Common myeloid progenitor, CD34-positive (primary cell): ENCODE measurements at regions of chr7 and their contacts with region 1.

Region 1: GRCh38 chr7:4791738-4792536 is 16.5 kb downstream of the AP5Z1 start:
- DNase-seq: peak; percentile 75 to 88 (median 84)
- H3K4me3 ChIP-seq: peak overlapping the region in 6 of 7 experiments; percentile 30 to 72 (median 66)
- H3K27ac ChIP-seq: no peak overlapping the region
- H3K4me1 ChIP-seq: peaks cover 0 to 12% (median 5%) of the 10 kb centered on the region in 4 experiments
- H3K27me3 ChIP-seq: no peaks in the 10 kb centered on the region

Region 2: DNA sequence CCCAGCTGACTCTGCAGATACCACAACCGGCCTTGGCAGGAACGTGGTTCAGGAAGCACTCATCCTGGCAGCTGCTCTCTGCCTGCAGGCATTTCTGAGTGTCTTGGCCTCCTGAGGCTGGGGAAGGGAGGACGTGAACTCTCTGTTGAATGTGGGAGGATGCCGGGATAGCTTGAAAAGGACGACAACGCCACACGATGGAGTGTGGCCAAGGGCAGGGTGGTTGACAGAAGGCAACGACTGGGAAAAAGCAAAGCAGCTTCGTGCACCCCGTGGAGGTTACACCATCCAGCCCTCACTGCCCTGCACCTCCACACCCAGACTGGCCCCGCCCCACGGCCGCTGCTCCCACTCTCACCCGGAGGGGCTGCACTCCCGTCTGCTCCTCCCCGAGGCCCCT is 575.9 kb before region 1 on chr7:
- CTCF ChIA-PET with region 1: no interaction called
- POLR2A ChIA-PET with region 1: no interaction called
- DNase-seq: no peak
- H3K4me3 ChIP-seq: peak overlapping the region in 1 of 7 experiments; percentile 4
- H3K27ac ChIP-seq: no peak overlapping the region
- H3K4me1 ChIP-seq: peaks cover 0 to 9% (median 3%) of the 10 kb centered on the region in 4 experiments
- H3K27me3 ChIP-seq: no peaks in the 10 kb centered on the region

Region 3: DNA sequence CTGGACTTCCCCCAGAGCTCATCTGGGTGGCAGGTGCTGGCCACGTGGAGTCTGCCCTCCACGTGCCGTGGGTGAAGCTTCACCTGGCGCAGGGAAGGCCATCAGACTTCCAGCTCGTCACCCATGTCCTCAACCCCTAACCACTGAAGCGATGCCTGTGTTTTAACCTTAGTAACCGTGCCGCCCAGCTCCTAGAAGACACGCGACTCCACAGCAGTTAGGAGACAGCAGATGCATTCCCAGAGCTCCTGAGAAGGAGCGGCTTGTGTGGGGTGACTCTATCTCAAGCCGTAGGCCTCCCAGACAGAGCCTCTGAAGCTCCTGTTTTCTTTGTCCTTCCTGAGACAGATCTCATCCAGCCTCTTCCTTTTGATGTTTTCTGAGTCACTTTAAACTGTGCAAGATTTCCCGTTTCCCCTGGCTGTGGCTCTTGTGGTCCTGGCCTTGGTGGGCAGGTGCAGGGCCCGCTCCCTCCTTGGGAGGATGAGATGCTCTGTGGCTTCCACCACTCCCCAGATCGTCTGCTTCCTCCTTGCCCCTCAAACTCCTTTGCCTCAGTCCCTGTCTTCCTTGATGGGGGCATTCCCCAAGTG is 57.9 kb before region 1 on chr7:
- CTCF ChIA-PET with region 1: no interaction called
- POLR2A ChIA-PET with region 1: no interaction called
- DNase-seq: peak in 2 of 3 donors; percentile 83 to 84
- H3K4me3 ChIP-seq: peak overlapping the region in 3 of 7 experiments; percentile 5 to 36 (median 28)
- H3K27ac ChIP-seq: no peak overlapping the region
- H3K4me1 ChIP-seq: peaks cover 0 to 43% (median 42%) of the 10 kb centered on the region in 4 experiments
- H3K27me3 ChIP-seq: no peaks in the 10 kb centered on the region

Region 4: DNA sequence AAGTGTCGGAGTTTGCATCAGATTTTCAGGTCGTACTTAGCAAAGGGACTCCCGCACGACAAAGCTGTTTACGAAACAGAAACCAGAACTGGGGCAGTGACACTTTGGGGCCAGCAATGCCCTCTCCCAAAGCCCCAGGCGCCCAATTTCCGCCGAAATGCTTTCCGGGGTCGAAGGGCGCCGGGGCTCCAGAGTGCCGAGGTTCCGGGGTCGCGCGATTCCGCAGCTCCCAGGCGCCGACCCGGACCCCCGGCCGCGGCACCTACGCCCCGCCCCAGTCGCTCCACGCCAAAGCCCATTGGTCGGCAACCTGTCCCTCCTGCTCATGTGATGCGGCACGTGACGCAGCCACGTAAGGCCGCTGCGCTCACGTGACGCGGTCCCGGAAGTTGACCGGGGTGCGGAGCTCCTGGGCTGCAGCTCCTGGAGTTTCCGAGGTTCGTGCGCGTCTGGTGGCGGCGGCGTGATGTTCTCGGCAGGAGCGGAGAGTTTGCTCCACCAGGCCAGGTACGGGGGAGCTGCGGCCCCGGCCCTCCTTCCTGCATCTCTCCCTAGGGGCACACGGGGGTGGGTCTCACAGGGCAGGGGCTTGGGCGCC is 16.6 kb before region 1 on chr7 and contains the start of gene AP5Z1:
- CTCF ChIA-PET with region 1: interaction called, 36 read pairs
- POLR2A ChIA-PET with region 1: interaction called, 19 read pairs
- DNase-seq: peak; percentile 97 to 98 (median 98)
- H3K4me3 ChIP-seq: peak within 1 kb of the TSS; percentile 90 to 99 (median 93)
- H3K27ac ChIP-seq: peak within 1 kb of the TSS; percentile 92 to 97
- H3K4me1 ChIP-seq: peaks cover 3 to 33% (median 25%) of the 10 kb centered on the region in 4 experiments
- H3K27me3 ChIP-seq: no peaks in the 10 kb centered on the region

Region 5: GRCh38 chr7:4809091-4809591 is 17.2 kb after region 1 on chr7:
- CTCF ChIA-PET with region 1: interaction called, 17 read pairs
- POLR2A ChIA-PET with region 1: interaction called, 5 read pairs
- DNase-seq: peak; percentile 85 to 93 (median 87)
- H3K4me3 ChIP-seq: peak overlapping the region in 5 of 7 experiments; percentile 29 to 69 (median 52)
- H3K27ac ChIP-seq: peak overlapping the region in 1 of 2 experiments; percentile 68
- H3K4me1 ChIP-seq: peaks cover 0 to 40% (median 22%) of the 10 kb centered on the region in 4 experiments
- H3K27me3 ChIP-seq: no peaks in the 10 kb centered on the region

Region 6: DNA sequence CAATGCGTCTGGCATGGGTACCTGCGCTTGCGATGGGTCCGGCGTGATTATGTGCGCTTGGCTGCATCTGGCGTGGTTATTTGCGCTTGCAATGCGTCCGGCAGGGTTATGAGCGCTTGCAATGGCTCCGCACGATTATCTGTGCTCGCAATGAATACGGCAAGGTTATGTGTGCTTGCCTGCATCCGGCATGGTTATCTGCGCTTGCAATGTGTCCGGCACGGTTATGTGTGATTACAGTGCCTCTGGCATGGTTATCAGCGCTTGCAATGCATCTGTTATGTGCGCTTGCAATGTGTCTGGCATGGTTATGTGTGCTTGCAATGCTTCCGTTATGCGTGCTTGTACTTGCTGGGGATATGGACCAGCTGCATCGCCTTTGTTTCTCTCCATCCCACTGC is 291.4 kb after region 1 on chr7:
- CTCF ChIA-PET with region 1: interaction called, 52 read pairs
- POLR2A ChIA-PET with region 1: no interaction called
- DNase-seq: peak in 1 of 3 donors; percentile 35
- H3K4me3 ChIP-seq: no peak overlapping the region
- H3K27ac ChIP-seq: no peak overlapping the region
- H3K4me1 ChIP-seq: peaks cover 0 to 9% (median 2%) of the 10 kb centered on the region in 4 experiments
- H3K27me3 ChIP-seq: peaks cover 0 to 18% (median 2%) of the 10 kb centered on the region in 5 experiments